Stomach (tissue), 19 donors: ENCODE measurements at regions of chr15 and their contacts with region 1.

Region 1: GRCh38 chr15:38699633-38700230 is 135.1 kb upstream of the RASGRP1 start:
- DNase-seq: peak; percentile 73 to 83
- H3K4me3 ChIP-seq: no peak overlapping the region
- H3K27ac ChIP-seq: no peak overlapping the region
- H3K4me1 ChIP-seq: peaks cover 0 to 18% (median 7%) of the 10 kb centered on the region in 4 donors
- H3K27me3 ChIP-seq: no peaks in the 10 kb centered on the region
- CTCF ChIP-seq: peak in 5 of 7 experiments; percentile 54 to 86 (median 70)
- EP300 ChIP-seq: no peak
- POLR2A ChIP-seq: no peak

Region 2: GRCh38 chr15:38440353-38441129 is 259.2 kb before region 1 on chr15:
- intact Hi-C with region 1: loop called (anchors 10 kb)
- DNase-seq: peak; percentile 49 to 88
- H3K4me3 ChIP-seq: no peak overlapping the region
- H3K27ac ChIP-seq: no peak overlapping the region
- H3K4me1 ChIP-seq: peaks cover 0 to 9% (median 7%) of the 10 kb centered on the region in 4 donors
- H3K27me3 ChIP-seq: peaks cover 0 to 4% (median 0%) of the 10 kb centered on the region in 3 donors
- CTCF ChIP-seq: peak in 5 of 7 experiments; percentile 83 to 96 (median 89)
- EP300 ChIP-seq: no peak
- POLR2A ChIP-seq: no peak

Region 3: DNA sequence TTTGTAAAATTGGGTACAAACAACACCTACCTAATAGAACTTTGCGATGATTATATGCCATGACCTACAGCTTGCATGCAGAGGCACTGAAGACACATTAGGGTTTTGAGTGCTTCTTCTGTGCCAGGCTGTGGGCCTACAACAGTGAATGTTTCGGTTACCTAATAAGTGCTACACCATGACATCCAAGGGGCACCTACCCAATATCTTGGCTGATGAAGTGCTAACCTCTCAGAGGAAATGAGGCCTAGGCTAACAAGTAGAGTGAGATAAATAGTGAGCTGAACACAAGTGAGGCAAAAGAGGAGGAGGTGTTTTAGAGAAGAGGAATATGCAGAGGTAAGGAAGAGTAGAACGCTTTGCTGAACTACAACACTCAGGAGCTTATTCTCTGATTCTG is 122.9 kb before region 1 on chr15:
- intact Hi-C with region 1: no loop called
- DNase-seq: no peak
- H3K4me3 ChIP-seq: no peak overlapping the region
- H3K27ac ChIP-seq: no peak overlapping the region
- H3K4me1 ChIP-seq: no peaks in the 10 kb centered on the region
- H3K27me3 ChIP-seq: peaks cover 0 to 5% (median 0%) of the 10 kb centered on the region in 3 donors
- CTCF ChIP-seq: no peak
- EP300 ChIP-seq: no peak
- POLR2A ChIP-seq: no peak

Region 4: GRCh38 chr15:39465843-39466749 is 766.4 kb after region 1 on chr15:
- intact Hi-C with region 1: no loop called
- DNase-seq: peak; percentile 34 to 85
- H3K4me3 ChIP-seq: no peak overlapping the region
- H3K27ac ChIP-seq: peak overlapping the region; percentile 47 to 83 (median 68)
- H3K4me1 ChIP-seq: peaks cover 0 to 6% (median 3%) of the 10 kb centered on the region in 4 donors
- H3K27me3 ChIP-seq: no peaks in the 10 kb centered on the region
- CTCF ChIP-seq: no peak
- EP300 ChIP-seq: no peak
- POLR2A ChIP-seq: no peak

Region 5: DNA sequence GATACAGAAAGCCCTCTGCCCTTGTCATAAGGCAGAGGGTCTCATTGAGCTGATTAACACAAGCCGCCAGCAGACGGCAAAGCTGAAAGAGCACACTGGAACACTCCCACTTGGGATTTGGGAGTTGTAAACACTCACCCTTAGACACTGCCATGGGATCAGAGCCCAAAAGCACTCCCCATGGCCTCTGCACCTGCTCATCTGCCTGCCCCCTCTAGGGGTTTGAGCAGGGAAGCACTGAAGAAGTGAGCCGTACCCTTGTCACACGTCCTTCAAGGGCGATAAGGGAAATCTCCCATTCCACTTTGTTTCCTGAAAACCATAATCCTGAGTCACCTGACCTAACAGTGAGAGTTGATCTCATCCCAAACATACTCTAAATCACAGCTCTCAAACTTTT is 1068.2 kb after region 1 on chr15:
- intact Hi-C with region 1: loop called (anchors 10 kb)
- DNase-seq: no peak
- H3K4me3 ChIP-seq: no peak overlapping the region
- H3K27ac ChIP-seq: no peak overlapping the region
- H3K4me1 ChIP-seq: no peaks in the 10 kb centered on the region
- H3K27me3 ChIP-seq: no peaks in the 10 kb centered on the region
- CTCF ChIP-seq: no peak
- EP300 ChIP-seq: no peak
- POLR2A ChIP-seq: no peak